ENCODE measurements at regions of chr11 and their contacts with region 1.

Region 1: DNA sequence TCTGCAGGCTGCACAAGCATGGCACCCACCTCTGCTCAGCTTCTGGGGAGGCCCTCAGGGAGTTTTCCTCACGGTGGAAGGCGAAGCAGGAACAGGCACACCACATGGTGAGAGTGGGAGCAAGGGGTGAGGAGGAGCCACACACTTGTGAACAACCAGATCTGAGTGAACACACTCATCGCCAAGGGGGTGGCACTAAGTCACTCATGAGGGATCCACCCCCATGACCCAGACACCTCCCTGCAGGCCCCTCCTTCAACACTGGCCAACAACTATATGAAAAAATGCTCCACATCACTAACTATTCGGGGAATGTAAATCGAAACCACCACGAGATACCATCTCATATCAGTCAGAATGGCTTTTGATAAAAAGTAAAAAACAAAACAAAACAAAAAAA is 722 bp upstream of the KRTAP5-2 start:
- DNase-seq: no peak
- ATAC-seq: no peak
- H3K4me3 Mint-ChIP-seq: no peak overlapping the region
- H3K27ac Mint-ChIP-seq: no peak overlapping the region
- H3K4me1 Mint-ChIP-seq: peaks cover 35% of the 10 kb centered on the region
- H3K27me3 Mint-ChIP-seq: peaks cover 57% of the 10 kb centered on the region
- CTCF ChIP-seq: no peak

Region 2: GRCh38 chr11:1559119-1559951 is 39.5 kb before region 1 on chr11:
- CTCF ChIA-PET with region 1: interaction called, 29 read pairs
- POLR2A ChIA-PET with region 1: no interaction called
- DNase-seq: peak; percentile 75
- ATAC-seq: peak; percentile 41
- H3K4me3 Mint-ChIP-seq: no peak overlapping the region
- H3K27ac Mint-ChIP-seq: no peak overlapping the region
- H3K4me1 Mint-ChIP-seq: peaks cover 20% of the 10 kb centered on the region
- H3K27me3 Mint-ChIP-seq: peaks cover 56% of the 10 kb centered on the region
- CTCF ChIP-seq: no peak

Region 3: GRCh38 chr11:1572197-1573076 is 26.4 kb before region 1 on chr11 and contains the start of gene DUSP8:
- CTCF ChIA-PET with region 1: interaction called, 57 read pairs
- POLR2A ChIA-PET with region 1: no interaction called
- DNase-seq: peak; percentile 81
- ATAC-seq: peak; percentile 8
- H3K4me3 Mint-ChIP-seq: peak within 1 kb of the TSS; percentile 36; the same call in 1 of the 2 replicates
- H3K27ac Mint-ChIP-seq: no peak within 1 kb of the TSS
- H3K4me1 Mint-ChIP-seq: peaks cover 13% of the 10 kb centered on the region
- H3K27me3 Mint-ChIP-seq: peaks cover 66% of the 10 kb centered on the region
- CTCF ChIP-seq: no peak
- total RNA-seq, gene DUSP8: 1.7 to 2.5 TPM (median 2.4 TPM) in 3 replicates

Region 4: DNA sequence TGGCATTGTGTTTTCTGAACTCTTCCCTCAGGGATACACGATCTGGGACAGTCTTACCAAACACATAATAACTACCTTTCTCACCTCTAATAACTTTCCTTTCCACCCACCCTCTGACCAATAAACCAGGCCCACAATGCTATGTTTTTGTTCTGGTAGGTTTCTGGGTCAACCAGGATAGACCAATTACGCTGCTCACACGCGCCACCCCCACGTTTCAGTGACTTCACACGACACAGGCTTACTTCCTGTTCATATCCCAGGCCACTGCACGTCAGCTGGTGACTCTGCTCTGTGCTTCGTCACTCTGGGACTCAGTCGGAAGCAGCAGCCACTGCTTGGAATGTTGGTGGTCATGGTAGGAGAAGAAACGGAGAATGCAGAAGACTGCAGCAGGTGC is 20.6 kb after region 1 on chr11:
- CTCF ChIA-PET with region 1: interaction called, 102 read pairs
- POLR2A ChIA-PET with region 1: no interaction called
- DNase-seq: no peak
- ATAC-seq: no peak
- H3K4me3 Mint-ChIP-seq: no peak overlapping the region
- H3K27ac Mint-ChIP-seq: no peak overlapping the region
- H3K4me1 Mint-ChIP-seq: peaks cover 7% of the 10 kb centered on the region
- H3K27me3 Mint-ChIP-seq: peaks cover 46% of the 10 kb centered on the region
- CTCF ChIP-seq: no peak

Region 5: DNA sequence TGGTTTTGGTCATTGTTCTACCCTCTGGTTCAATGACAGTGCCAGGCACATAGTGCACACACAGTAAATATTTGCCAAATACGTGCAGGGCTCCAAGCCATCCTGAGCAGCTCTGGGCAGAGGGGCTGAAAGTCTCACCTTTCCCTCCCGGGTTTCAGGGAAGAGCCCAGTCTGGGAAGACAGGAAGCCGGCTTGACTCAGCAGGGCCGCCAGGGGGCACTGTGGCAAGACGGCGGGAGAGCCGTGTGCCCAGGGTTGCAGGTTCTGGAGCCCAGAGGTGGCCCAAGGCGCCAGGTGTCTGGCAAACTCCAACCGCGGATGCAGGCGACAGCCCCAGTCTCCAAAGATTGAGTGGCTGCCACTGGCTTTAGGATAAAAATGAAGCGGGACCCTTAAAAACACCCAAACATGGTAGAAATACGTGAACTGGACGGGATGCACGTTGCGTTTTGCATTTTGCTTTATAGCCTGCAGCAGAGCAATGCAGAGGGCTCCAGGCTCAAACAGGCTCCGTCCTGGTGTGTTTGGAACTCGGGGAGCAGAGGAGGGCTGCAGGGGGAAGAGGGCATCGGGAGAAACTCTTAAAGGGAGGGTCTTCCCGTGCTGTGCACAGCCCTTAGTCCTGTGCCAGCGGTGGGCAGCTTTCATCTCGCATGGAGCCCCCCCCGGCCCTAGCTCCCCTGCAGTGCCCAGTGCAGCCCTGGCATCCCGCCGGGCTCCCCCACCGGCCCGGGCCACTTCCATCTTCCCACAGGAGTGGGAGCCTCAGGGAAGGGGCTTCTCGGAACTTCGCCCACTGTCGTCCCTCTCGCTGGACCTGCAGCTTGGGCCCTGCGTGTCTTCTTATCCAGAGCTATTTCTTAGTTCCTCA is 41.5 kb after region 1 on chr11:
- CTCF ChIA-PET with region 1: interaction called, 21 read pairs
- POLR2A ChIA-PET with region 1: no interaction called
- DNase-seq: peak; percentile 74
- ATAC-seq: peak; percentile 94
- H3K4me3 Mint-ChIP-seq: no peak overlapping the region
- H3K27ac Mint-ChIP-seq: no peak overlapping the region
- H3K4me1 Mint-ChIP-seq: peaks cover 3% of the 10 kb centered on the region
- H3K27me3 Mint-ChIP-seq: peaks cover 4% of the 10 kb centered on the region
- CTCF ChIP-seq: peak; percentile 83